Activated T-helper 2 cell treated with anti-CD3 and anti-CD28 coated beads, Interferon-gamma antibody, Interleukin-2, Interleukin-4, amounts not matched to agents 10 μg/mL and 5 μg/mL and 100 μg/mL, durations not matched to agents 14 hours and 24 hours and 36 hours (primary cell): ENCODE measurements at regions of chr3 and their contacts with region 1.

Region 1: DNA sequence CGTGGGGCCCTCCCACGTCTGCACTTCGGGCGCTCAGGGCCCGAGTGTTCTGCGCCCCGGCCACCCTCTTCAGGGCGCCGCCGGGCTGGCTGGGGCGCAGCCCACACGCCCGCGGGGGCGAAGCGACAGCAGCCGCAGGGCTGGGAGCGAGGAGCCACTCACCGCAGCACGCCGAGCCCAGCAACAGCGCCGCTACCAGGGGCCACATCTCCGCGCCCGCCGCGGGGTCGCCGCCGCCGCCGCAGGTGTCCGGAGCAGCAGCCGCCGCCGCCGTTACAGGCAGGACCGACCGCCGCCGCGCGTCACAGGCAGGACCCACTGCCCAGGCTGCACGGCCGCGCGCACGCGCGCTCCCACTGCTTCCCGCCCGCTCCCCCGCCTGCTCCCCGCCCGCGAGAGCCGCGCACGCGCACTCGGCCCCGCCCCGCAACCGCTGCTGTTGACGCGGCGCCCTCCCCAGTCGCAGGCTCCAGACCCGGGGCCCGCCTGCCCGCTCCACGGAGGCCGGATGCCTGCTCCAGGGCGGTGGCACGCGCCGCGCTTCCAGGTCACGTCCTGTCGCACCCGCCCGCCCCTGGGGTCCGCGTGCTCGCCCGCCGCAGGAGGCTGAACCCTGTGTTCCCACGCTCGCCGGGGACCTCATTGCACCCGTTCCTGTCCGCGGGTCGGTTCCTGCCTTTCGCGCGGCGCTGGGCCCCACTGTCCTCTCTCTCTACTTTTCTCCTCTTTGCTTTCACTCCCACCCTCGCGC is at the start of gene CD47:
- DNase-seq: peak; percentile 95
- H3K4me3 Mint-ChIP-seq: peak within 1 kb of the TSS; percentile 99
- H3K27ac Mint-ChIP-seq: peak within 1 kb of the TSS; percentile 100
- H3K4me1 Mint-ChIP-seq: peaks cover 29% of the 10 kb centered on the region
- H3K27me3 Mint-ChIP-seq: peaks cover 2% of the 10 kb centered on the region
- total RNA-seq, gene CD47: 145 and 146 TPM in 2 replicates

Region 2: DNA sequence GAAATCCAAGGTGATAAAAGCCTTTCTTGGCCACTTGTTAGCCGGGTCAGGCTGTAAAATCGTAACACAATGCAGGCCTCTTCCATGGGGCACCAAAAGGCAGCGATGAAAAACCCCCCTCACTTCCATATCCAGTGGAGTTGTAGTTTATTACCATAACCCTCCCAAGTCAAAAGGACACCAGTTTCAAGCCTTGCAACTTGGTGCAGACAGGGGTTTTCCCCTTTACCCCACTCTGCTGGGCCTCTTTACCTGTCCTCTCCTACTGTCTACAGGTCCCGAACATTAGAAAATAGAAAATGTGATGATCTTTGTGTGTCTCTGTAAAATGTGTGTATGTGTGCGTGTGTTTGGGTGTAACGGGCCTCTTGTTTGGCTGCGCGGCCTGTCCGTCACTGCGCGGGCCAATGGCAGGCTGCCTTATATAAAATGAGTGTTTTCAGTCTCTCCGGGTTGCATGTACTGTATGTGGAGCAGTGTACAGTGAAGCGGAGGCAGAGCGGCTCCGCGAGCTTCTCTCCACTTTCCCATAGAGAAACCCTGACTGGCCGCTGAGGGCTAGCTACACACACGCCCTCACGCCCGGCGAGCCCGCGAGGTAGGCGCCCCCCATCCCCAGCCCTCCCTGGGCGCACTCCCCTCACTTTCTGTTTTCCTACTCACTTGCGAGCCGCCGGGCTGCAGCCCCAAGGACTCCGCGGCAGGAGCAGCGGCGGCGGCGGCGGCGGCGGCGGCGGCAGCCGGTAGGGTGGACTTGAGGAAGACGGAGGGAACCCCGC is 568.2 kb before region 1 on chr3 and contains the start of gene BBX:
- intact Hi-C with region 1: loop called (anchors 10 kb)
- DNase-seq: peak; percentile 93
- H3K4me3 Mint-ChIP-seq: peak within 1 kb of the TSS; percentile 96
- H3K27ac Mint-ChIP-seq: peak within 1 kb of the TSS; percentile 95
- H3K4me1 Mint-ChIP-seq: peaks cover 19% of the 10 kb centered on the region
- H3K27me3 Mint-ChIP-seq: peaks cover 2% of the 10 kb centered on the region
- total RNA-seq, gene BBX: 35.8 and 39.8 TPM in 2 replicates

Region 3: DNA sequence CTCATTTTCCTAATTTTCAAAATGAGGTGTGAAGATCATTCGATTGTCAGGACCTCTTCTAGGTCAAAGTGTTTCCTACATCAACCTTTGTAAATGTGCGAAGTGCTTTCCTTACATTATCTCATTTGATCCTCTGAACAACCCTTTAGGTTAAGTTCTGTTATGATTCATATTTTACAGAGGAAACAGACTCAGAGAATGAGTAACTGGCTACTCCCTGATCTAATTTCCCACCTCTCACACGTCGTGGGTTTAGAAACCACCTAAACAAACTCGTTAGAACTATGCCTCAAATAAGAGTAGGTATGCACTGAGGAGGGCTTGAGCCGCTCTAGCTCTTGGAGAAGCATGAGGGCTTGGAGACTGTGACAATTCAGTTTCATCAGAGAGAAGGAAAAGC is 148.6 kb before region 1 on chr3:
- intact Hi-C with region 1: loop called (anchors 1 kb)
- DNase-seq: peak; percentile 15
- H3K4me3 Mint-ChIP-seq: no peak overlapping the region
- H3K27ac Mint-ChIP-seq: peak overlapping the region; percentile 78
- H3K4me1 Mint-ChIP-seq: peaks cover 23% of the 10 kb centered on the region
- H3K27me3 Mint-ChIP-seq: peaks cover under 1% of the 10 kb centered on the region

Region 4: DNA sequence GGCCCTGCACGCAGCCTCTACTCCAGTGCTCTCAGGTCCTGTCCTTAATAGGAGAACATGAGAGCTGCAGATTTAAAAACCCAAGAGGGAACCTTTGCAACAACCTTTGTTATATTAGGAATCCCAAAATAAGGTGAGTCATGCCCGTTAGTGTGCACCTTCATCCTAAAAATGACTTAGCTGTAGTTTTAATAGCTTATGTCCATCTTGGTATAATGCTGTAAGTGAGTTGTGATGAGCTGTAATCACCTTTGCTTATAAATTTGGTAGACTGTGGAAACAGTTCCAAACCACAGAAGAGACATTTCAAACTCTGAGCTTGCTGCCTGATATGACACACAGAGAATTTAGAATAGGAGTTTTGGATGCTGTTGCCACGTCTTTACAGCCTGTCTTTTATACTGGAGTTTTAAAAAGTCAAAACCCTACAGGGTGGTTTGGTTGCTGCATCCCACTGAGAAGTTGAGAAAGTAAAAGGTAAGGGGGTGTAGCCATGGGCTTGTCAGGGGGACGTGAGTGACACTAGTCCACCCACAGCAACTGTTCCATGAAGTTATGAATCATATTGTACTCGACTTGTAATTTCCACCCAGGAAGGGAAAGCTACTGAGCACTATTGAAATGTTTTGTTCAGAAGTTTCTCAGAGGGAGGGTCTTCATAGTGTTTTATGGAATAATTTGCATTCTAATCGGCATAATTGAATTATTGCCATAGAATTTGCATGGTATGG is 27.3 kb after region 1 on chr3:
- intact Hi-C with region 1: loop called (anchors 1 kb)
- DNase-seq: no peak
- H3K4me3 Mint-ChIP-seq: no peak overlapping the region
- H3K27ac Mint-ChIP-seq: peak overlapping the region; percentile 76
- H3K4me1 Mint-ChIP-seq: peaks cover 44% of the 10 kb centered on the region
- H3K27me3 Mint-ChIP-seq: peaks cover under 1% of the 10 kb centered on the region

Region 5: DNA sequence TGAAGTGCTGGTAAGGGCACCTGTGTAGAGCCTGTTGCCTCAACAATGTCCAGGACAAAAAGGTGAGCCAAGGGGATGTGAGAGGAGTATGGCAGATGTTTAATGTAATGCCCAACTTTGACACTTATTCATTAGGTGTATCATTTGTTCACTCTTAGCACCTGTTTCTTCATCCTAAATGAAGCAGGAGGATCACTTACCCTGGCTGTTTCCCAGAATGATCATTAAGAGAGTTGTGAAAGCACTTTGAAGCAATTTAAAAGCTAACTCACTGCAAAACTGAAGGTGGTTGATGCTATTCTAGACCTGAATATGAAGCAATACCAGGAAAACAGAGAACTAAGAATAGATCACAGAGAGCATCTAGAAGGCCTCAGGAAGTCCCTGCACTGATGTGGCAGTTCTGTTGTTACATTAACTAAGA is 202.0 kb after region 1 on chr3:
- intact Hi-C with region 1: loop called (anchors 1 kb)
- DNase-seq: no peak
- H3K4me3 Mint-ChIP-seq: no peak overlapping the region
- H3K27ac Mint-ChIP-seq: peak overlapping the region; percentile 80
- H3K4me1 Mint-ChIP-seq: peaks cover 60% of the 10 kb centered on the region
- H3K27me3 Mint-ChIP-seq: no peaks in the 10 kb centered on the region

Region 6: GRCh38 chr3:108818404-108818803 is 727.5 kb after region 1 on chr3:
- intact Hi-C with region 1: loop called (anchors 5 kb)
- DNase-seq: peak; percentile 54
- H3K4me3 Mint-ChIP-seq: no peak overlapping the region
- H3K27ac Mint-ChIP-seq: peak overlapping the region; percentile 26
- H3K4me1 Mint-ChIP-seq: peaks cover 30% of the 10 kb centered on the region
- H3K27me3 Mint-ChIP-seq: no peaks in the 10 kb centered on the region